Psoas muscle (tissue), 8 donors: ENCODE measurements at regions of chr4 and their contacts with region 1.

Region 1: DNA sequence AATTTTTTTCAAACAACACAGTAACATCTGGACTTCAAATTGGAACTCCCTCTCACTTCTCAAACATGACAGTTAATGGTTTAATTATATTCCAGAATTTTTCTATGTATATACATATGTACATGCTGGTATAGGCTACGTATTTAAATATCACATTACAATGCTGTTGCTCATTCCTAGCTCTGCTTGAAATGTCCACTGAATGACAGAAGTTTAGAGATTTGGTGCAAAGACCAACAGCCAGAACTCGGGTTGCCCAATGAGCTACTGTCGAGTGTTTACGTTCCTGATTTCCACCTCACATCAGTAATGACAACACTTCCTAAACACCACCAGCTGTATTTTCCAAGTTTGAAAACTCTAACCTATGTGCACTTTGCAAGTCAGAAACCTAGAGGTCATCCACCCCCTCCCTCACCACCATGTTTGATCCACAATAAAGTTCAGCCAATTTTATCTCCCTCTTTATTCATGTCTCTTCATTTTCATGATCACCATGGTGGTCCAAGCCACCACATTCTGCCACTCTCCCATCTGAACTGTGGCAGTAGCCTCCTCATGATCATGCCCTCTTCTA is 49.3 kb upstream of the RPL34 start:
- DNase-seq: no peak
- ATAC-seq: no peak
- H3K4me3 ChIP-seq: no peak overlapping the region
- H3K27ac ChIP-seq: no peak overlapping the region
- H3K4me1 ChIP-seq: no peaks in the 10 kb centered on the region
- H3K27me3 ChIP-seq: peaks cover 0 to 7% (median 0%) of the 10 kb centered on the region in 3 donors
- CTCF ChIP-seq: no peak

Region 2: GRCh38 chr4:108018040-108018883 is 552.8 kb before region 1 on chr4:
- intact Hi-C with region 1: loop called (anchors 5 kb)
- DNase-seq: peak; percentile 72 to 83
- ATAC-seq: peak; percentile 80 to 92 (median 88)
- H3K4me3 ChIP-seq: no peak overlapping the region
- H3K27ac ChIP-seq: peak overlapping the region; percentile 38
- H3K4me1 ChIP-seq: peaks cover 16% of the 10 kb centered on the region
- H3K27me3 ChIP-seq: no peaks in the 10 kb centered on the region
- CTCF ChIP-seq: peak; percentile 93